Transverse colon (tissue), 4 donors: ENCODE measurements at regions of chr1 and their contacts with region 1.

Region 1: GRCh38 chr1:151165738-151166505 is at the starts of genes LYSMD1 and SCNM1:
- DNase-seq: peak; percentile 98
- H3K4me3 ChIP-seq: peak within 1 kb of the TSS; percentile 47 to 94 (median 78)
- H3K27ac ChIP-seq: peak within 1 kb of the TSS; percentile 84 to 94 (median 88)
- H3K4me1 ChIP-seq: peaks cover 6 to 25% (median 20%) of the 10 kb centered on the region in 4 donors
- H3K27me3 ChIP-seq: no peaks in the 10 kb centered on the region
- CTCF ChIP-seq: peak in 3 of 5 experiments; percentile 14 to 58 (median 49)
- EP300 ChIP-seq: peak; percentile 44
- POLR2A ChIP-seq: peak; percentile 62
- total RNA-seq, gene LYSMD1: 1.4 to 15.7 (median 7.3) TPM
- total RNA-seq, gene SCNM1: 9.0 to 35.4 (median 25.1) TPM

Region 2: DNA sequence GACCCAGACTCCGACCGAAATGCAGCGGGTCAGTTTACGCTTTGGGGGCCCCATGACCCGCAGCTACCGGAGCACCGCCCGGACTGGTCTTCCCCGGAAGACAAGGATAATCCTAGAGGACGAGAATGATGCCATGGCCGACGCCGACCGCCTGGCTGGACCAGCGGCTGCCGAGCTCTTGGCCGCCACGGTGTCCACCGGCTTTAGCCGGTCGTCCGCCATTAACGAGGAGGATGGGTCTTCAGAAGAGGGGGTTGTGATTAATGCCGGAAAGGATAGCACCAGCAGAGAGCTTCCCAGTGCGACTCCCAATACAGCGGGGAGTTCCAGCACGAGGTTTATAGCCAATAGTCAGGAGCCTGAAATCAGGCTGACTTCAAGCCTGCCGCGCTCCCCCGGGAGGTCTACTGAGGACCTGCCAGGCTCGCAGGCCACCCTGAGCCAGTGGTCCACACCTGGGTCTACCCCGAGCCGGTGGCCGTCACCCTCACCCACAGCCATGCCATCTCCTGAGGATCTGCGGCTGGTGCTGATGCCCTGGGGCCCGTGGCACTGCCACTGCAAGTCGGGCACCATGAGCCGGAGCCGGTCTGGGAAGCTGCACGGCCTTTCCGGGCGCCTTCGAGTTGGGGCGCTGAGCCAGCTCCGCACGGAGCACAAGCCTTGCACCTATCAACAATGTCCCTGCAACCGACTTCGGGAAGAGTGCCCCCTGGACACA is 117.8 kb before region 1 on chr1:
- in situ Hi-C with region 1: loop called in 1 of 4 experiments (anchors 25 kb)
- intact Hi-C with region 1: no loop called
- DNase-seq: peak; percentile 76
- H3K4me3 ChIP-seq: peak overlapping the region; percentile 54 to 80 (median 62)
- H3K27ac ChIP-seq: peak overlapping the region; percentile 85 to 89 (median 88)
- H3K4me1 ChIP-seq: peaks cover 3 to 16% (median 10%) of the 10 kb centered on the region in 4 donors
- H3K27me3 ChIP-seq: no peaks in the 10 kb centered on the region
- CTCF ChIP-seq: peak in 2 of 5 experiments; percentile 52 to 56
- EP300 ChIP-seq: no peak
- POLR2A ChIP-seq: no peak

Region 3: DNA sequence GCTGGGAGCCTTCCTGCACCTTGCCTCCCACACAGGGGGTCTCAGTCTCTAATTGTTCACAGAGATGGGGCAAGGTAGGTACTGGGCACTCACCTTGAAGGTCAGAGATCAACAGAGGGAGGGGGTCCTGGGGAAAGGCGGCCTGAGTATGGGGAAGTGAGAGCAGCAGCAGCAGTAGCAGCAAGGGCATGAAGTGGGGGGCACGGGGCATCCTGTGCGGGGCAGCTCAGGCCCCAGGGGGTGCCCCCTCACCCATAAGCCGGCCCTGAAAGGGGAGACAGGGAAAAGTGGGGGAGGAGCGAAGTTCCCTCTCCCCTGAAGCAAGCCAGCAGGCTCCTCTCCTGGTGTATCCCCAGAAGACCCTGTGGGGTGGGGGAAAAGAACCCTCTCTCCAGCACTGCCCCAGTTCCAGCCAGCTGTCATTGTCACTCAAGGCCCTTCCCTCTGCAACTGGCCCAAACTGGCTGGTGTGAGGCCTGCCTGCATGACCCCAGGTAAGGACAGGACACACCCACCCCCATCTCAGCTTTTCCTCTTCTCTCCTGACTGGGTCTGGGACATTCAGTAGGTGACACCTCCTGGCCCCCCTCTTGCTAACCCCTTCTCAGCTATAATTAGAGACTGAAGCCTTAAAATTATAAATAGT is 23.4 kb before region 1 on chr1:
- in situ Hi-C with region 1: no loop called
- intact Hi-C with region 1: loop called (anchors 1 kb)
- DNase-seq: no peak
- H3K4me3 ChIP-seq: no peak overlapping the region
- H3K27ac ChIP-seq: no peak overlapping the region
- H3K4me1 ChIP-seq: peaks cover 3 to 28% (median 18%) of the 10 kb centered on the region in 4 donors
- H3K27me3 ChIP-seq: peaks cover 9% of the 10 kb centered on the region
- CTCF ChIP-seq: no peak
- EP300 ChIP-seq: no peak
- POLR2A ChIP-seq: no peak